Mucosa of descending colon (tissue), 3 donors: ENCODE measurements at regions of chr1 and their contacts with region 1.

Region 1: DNA sequence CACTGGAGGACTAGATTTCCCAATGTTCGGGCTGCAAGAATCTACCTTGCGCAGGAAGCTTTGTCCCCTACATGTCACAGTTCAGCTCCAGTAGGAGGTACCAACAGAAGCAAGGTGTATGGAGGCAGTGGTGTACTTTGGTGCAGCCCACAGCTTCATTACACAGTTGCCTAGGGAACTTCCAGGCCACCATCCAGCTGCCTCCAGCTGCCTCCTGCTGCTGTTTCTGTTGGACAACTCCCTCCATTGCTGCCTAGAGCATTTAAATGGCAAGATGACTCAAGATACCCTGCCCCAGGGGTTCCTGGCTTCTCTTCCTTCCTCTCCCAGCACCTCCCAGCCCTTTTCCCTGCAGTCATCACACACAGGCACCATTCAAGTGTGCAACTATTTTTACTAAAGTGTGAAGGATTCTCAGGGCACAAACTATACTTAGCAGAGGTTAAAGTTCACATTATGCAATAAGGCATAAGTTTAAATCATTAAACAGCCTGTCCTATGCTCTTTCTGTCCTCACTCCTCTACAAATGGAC is 39.0 kb upstream of the ATP1A1 start:
- DNase-seq: peak in 2 of 3 donors; percentile 55 to 62
- ATAC-seq: peak; percentile 70
- H3K4me3 ChIP-seq: no peak overlapping the region
- H3K4me1 ChIP-seq: peaks cover 45% of the 10 kb centered on the region
- CTCF ChIP-seq: no peak

Region 2: GRCh38 chr1:115771847-115772457 is 562.1 kb before region 1 on chr1:
- intact Hi-C with region 1: no loop called
- DNase-seq: peak in 2 of 3 donors; percentile 32 to 63
- ATAC-seq: peak; percentile 92
- H3K4me3 ChIP-seq: no peak overlapping the region
- H3K4me1 ChIP-seq: no peaks in the 10 kb centered on the region
- CTCF ChIP-seq: peak; percentile 53

Region 3: GRCh38 chr1:116164604-116165368 is 169.3 kb before region 1 on chr1:
- intact Hi-C with region 1: no loop called
- DNase-seq: peak in 1 of 3 donors; percentile 37
- ATAC-seq: no peak
- H3K4me3 ChIP-seq: no peak overlapping the region
- H3K4me1 ChIP-seq: peaks cover 7% of the 10 kb centered on the region
- CTCF ChIP-seq: no peak

Region 4: DNA sequence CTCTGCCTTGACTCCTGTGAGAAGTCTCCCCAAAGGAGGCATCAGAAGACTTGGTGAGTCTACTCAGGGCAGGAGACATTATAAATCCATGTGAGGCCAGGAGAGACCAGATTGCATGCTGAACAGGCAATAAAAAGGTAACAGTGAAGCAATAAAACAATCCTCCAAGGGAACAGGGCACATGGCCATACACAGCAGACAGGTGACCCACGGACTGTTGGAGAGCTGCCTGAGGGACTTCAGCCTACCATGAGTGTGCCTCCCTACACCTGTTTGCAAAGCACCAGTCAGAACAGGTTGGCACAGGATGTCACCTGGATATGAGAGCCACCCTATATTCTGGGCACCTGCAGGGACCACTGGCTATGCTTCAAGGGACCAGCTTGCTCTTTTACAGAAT is 155.2 kb before region 1 on chr1:
- intact Hi-C with region 1: loop called in 1 of 2 experiments (anchors 10 kb)
- DNase-seq: peak; percentile 82 to 91 (median 85)
- ATAC-seq: peak; percentile 97
- H3K4me3 ChIP-seq: no peak overlapping the region
- H3K4me1 ChIP-seq: peaks cover 18% of the 10 kb centered on the region
- CTCF ChIP-seq: no peak

Region 5: GRCh38 chr1:116257341-116257767 is 76.7 kb before region 1 on chr1:
- intact Hi-C with region 1: loop called in 1 of 2 experiments (anchors 5 kb)
- DNase-seq: no peak
- ATAC-seq: peak; percentile 60
- H3K4me3 ChIP-seq: no peak overlapping the region
- H3K4me1 ChIP-seq: peaks cover 52% of the 10 kb centered on the region
- CTCF ChIP-seq: no peak

Region 6: GRCh38 chr1:116418091-116418830 is 84.2 kb after region 1 on chr1:
- intact Hi-C with region 1: no loop called
- DNase-seq: peak; percentile 84 to 92 (median 91)
- ATAC-seq: peak; percentile 97
- H3K4me3 ChIP-seq: peak overlapping the region; percentile 38
- H3K4me1 ChIP-seq: peaks cover 10% of the 10 kb centered on the region
- CTCF ChIP-seq: no peak